Sigmoid colon (tissue), 7 donors: ENCODE measurements at regions of chr4 and their contacts with region 1.

Region 1: GRCh38 chr4:83012687-83013419 is 2.2 kb upstream of the LIN54 start:
- DNase-seq: peak; percentile 99
- H3K4me3 ChIP-seq: peak overlapping the region; percentile 45 to 87 (median 68)
- H3K27ac ChIP-seq: peak overlapping the region; percentile 88 to 97 (median 89)
- H3K4me1 ChIP-seq: peaks cover 0 to 37% (median 33%) of the 10 kb centered on the region in 4 donors
- H3K27me3 ChIP-seq: no peaks in the 10 kb centered on the region
- CTCF ChIP-seq: peak in 3 of 4 experiments; percentile 47 to 62 (median 59)
- EP300 ChIP-seq: peak in 1 of 4 donors; percentile 69
- POLR2A ChIP-seq: peak; percentile 28 to 46

Region 2: GRCh38 chr4:82900331-82901128 is 112.3 kb before region 1 on chr4 and contains the start of gene THAP9:
- intact Hi-C with region 1: loop called (anchors 2 kb)
- DNase-seq: peak; percentile 100
- H3K4me3 ChIP-seq: peak within 1 kb of the TSS; percentile 54 to 82 (median 74)
- H3K27ac ChIP-seq: peak within 1 kb of the TSS; percentile 94 to 98 (median 98)
- H3K4me1 ChIP-seq: peaks cover 0 to 37% (median 34%) of the 10 kb centered on the region in 4 donors
- H3K27me3 ChIP-seq: no peaks in the 10 kb centered on the region
- CTCF ChIP-seq: no peak
- EP300 ChIP-seq: peak in 2 of 4 donors; percentile 5 to 13
- POLR2A ChIP-seq: peak; percentile 86 to 88
- total RNA-seq, gene THAP9: 3.9 to 7.5 (median 5.3) TPM